CD4-positive, alpha-beta memory T cell (primary cell): ENCODE measurements at regions of chr17 and their contacts with region 1.

Region 1: GRCh38 chr17:7306911-7307686 is at the start of gene EIF5A:
- DNase-seq: peak; percentile 99 to 100 (median 100)
- H3K4me3 ChIP-seq: peak within 1 kb of the TSS; percentile 81 to 85
- H3K4me3 Mint-ChIP-seq: peak within 1 kb of the TSS; percentile 93 to 97 (median 95)
- H3K27ac ChIP-seq: peak within 1 kb of the TSS; percentile 100
- H3K27ac Mint-ChIP-seq: peak within 1 kb of the TSS; percentile 99 to 100 (median 99)
- H3K4me1 ChIP-seq: peaks cover 35% of the 10 kb centered on the region
- H3K4me1 Mint-ChIP-seq: peaks cover 29 to 47% (median 36%) of the 10 kb centered on the region in 4 donors
- H3K27me3 ChIP-seq: no peaks in the 10 kb centered on the region
- H3K27me3 Mint-ChIP-seq: peaks cover 0 to 4% of the 10 kb centered on the region in 2 donors
- total RNA-seq, gene EIF5A: 240 to 244 TPM

Region 2: GRCh38 chr17:7214300-7215135 is 92.6 kb before region 1 on chr17:
- CTCF ChIA-PET with region 1: interaction called, 3 read pairs
- POLR2A ChIA-PET with region 1: no interaction called
- intact Hi-C with region 1: loop called (anchors 2 kb)
- DNase-seq: peak; percentile 97 to 99 (median 98)
- H3K4me3 ChIP-seq: peak overlapping the region; percentile 68 to 73
- H3K4me3 Mint-ChIP-seq: peak overlapping the region; percentile 90 to 98 (median 93)
- H3K27ac ChIP-seq: peak overlapping the region; percentile 96
- H3K27ac Mint-ChIP-seq: peak overlapping the region; percentile 98 to 100 (median 100)
- H3K4me1 ChIP-seq: peaks cover 54% of the 10 kb centered on the region
- H3K4me1 Mint-ChIP-seq: peaks cover 26 to 67% (median 43%) of the 10 kb centered on the region in 4 donors
- H3K27me3 ChIP-seq: no peaks in the 10 kb centered on the region
- H3K27me3 Mint-ChIP-seq: peaks cover 0 to 13% of the 10 kb centered on the region in 2 donors

Region 3: DNA sequence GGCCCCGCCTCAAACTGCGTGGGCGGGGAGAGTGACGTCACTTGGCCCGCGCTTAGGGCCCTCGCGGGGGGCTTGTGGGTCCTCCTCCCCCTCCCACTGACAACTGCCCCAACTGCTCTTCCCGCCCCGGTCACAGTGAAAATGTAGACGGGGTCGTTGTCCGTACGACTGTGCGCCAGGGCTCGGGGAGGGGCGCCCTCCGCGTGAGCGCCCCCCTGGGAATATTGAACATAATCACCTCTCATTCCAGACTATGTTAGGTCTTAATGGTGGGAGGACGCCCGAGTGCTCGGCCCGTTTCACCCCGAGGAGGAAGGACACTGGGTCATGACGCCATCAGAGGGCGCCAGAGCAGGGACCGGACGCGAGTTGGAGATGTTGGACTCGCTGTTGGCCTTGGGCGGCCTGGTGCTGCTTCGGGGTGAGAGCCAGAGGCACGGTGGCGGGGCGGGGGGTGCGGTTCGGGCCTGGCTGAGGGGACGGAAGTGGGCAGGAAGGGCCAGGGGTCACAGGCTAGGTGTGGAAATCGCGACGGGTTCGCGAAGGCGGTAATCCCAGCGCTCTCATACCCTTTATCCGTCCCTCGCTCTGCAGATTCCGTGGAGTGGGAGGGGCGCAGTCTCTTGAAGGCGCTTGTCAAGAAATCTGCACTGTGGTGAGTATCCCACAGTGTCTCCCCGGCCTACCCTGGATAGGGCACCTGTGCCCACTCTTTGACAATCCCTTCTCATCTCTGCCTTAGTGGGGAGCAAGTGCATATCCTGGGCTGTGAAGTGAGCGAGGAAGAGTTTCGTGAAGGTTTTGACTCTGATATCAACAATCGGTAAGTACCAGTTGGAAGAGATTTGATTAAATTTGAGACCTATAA is 54.7 kb before region 1 on chr17 and contains the start of gene ELP5:
- CTCF ChIA-PET with region 1: no interaction called
- POLR2A ChIA-PET with region 1: interaction called, 3 read pairs
- intact Hi-C with region 1: loop called (anchors 1 kb)
- DNase-seq: peak in 4 of 5 donors; percentile 86 to 92 (median 88)
- H3K4me3 ChIP-seq: peak within 1 kb of the TSS; percentile 71 to 92
- H3K4me3 Mint-ChIP-seq: peak within 1 kb of the TSS; percentile 91 to 97 (median 95)
- H3K27ac ChIP-seq: peak within 1 kb of the TSS; percentile 98
- H3K27ac Mint-ChIP-seq: peak within 1 kb of the TSS; percentile 98 to 100 (median 99)
- H3K4me1 ChIP-seq: peaks cover 37% of the 10 kb centered on the region
- H3K4me1 Mint-ChIP-seq: peaks cover 25 to 49% (median 38%) of the 10 kb centered on the region in 4 donors
- H3K27me3 ChIP-seq: no peaks in the 10 kb centered on the region
- H3K27me3 Mint-ChIP-seq: no peaks in the 10 kb centered on the region
- total RNA-seq, gene ELP5: 29.8 to 30.9 TPM

Region 4: DNA sequence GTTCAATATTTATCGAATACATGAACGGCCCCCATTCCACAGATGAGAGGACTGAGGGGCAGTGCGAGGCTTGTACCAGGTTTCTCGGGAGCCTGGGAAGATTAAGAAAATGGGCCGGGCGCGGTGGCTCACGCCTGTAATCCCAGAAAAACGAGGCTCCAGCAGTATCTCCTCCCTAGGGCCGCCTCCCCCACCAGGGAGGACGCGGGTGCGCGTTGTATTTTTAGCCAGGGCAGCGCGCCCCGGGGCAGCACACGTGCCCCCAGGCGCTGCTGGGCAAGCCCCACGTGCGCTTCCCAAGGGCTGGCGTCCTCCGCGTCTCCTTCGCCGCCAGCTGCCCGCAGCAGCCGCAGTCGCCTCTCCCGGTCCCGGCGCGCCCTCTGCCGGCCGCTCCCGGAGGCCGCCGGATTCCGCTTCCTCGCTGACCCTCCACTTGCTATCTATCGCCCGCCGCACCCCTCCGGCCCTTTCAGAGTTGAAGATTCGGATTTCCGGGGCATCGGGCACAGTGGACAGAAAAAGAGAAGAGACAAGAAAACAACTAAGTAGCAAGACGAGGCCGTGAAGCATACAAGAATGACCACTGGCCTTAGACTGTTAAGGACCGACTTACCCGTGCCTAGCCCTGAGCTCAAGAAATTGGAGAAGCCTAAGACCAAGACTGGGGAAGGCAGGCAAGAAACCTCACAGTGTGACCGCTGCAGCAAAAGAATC is 10.8 kb before region 1 on chr17:
- CTCF ChIA-PET with region 1: interaction called, 16 read pairs
- POLR2A ChIA-PET with region 1: interaction called, 4 read pairs
- intact Hi-C with region 1: loop called (anchors 1 kb)
- DNase-seq: peak; percentile 41 to 62 (median 51)
- H3K4me3 ChIP-seq: no peak overlapping the region
- H3K4me3 Mint-ChIP-seq: peak overlapping the region in 6 of 8 donors; percentile 8 to 86 (median 50)
- H3K27ac ChIP-seq: no peak overlapping the region
- H3K27ac Mint-ChIP-seq: peak overlapping the region in 3 of 7 donors; percentile 55 to 60 (median 59)
- H3K4me1 ChIP-seq: peaks cover 26% of the 10 kb centered on the region
- H3K4me1 Mint-ChIP-seq: peaks cover 7 to 31% (median 18%) of the 10 kb centered on the region in 4 donors
- H3K27me3 ChIP-seq: no peaks in the 10 kb centered on the region
- H3K27me3 Mint-ChIP-seq: peaks cover 2 to 19% of the 10 kb centered on the region in 2 donors

Region 5: DNA sequence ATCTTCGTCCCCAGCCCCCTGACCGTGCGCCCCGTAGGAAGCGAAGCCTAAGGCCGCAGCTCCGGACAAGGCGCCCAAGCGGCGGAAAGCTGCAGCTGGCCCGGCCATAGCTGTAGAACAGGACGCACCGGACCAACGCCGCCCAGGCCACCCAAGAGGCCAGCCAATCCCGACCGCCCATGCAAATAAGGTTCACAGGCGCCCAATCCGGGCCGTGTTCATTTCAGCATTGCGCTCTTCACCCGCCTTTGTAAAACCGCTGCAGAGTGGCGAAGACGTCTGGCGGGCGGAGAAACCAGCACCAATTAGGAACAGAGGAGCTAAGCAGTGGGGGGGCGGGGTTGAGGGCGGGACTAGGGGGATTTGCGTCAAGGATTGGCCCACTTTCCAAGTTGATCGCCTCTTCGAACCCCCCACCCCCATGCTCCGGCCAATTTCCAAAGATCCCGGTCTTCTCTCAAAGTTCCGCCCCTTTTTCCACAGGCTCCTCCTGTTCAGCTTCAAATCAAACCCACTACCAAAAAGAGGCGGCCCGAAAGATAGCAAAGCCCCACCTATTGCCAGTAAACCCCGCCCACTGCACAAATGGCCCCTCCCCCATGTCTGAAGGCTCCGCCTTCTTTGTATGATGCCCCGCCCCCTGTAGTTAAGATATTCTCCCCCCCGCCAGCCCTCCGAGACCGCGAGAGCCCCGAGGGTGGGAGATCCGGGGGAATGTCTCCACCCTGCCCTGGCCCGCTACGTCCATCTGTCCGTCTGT is 97.1 kb after region 1 on chr17 and contains the start of gene TMEM256:
- CTCF ChIA-PET with region 1: no interaction called
- POLR2A ChIA-PET with region 1: interaction called, 3 read pairs
- intact Hi-C with region 1: loop called (anchors 1 kb)
- DNase-seq: peak; percentile 91 to 98 (median 94)
- H3K4me3 ChIP-seq: peak within 1 kb of the TSS; percentile 73 to 77
- H3K4me3 Mint-ChIP-seq: peak within 1 kb of the TSS; percentile 93 to 98 (median 97)
- H3K27ac ChIP-seq: peak within 1 kb of the TSS; percentile 51
- H3K27ac Mint-ChIP-seq: peak within 1 kb of the TSS; percentile 89 to 99 (median 98)
- H3K4me1 ChIP-seq: peaks cover 17% of the 10 kb centered on the region
- H3K4me1 Mint-ChIP-seq: peaks cover 16 to 40% (median 18%) of the 10 kb centered on the region in 4 donors
- H3K27me3 ChIP-seq: no peaks in the 10 kb centered on the region
- H3K27me3 Mint-ChIP-seq: peaks cover 2% of the 10 kb centered on the region in 2 donors
- total RNA-seq, gene TMEM256: 35.4 to 38.3 TPM

Region 6: DNA sequence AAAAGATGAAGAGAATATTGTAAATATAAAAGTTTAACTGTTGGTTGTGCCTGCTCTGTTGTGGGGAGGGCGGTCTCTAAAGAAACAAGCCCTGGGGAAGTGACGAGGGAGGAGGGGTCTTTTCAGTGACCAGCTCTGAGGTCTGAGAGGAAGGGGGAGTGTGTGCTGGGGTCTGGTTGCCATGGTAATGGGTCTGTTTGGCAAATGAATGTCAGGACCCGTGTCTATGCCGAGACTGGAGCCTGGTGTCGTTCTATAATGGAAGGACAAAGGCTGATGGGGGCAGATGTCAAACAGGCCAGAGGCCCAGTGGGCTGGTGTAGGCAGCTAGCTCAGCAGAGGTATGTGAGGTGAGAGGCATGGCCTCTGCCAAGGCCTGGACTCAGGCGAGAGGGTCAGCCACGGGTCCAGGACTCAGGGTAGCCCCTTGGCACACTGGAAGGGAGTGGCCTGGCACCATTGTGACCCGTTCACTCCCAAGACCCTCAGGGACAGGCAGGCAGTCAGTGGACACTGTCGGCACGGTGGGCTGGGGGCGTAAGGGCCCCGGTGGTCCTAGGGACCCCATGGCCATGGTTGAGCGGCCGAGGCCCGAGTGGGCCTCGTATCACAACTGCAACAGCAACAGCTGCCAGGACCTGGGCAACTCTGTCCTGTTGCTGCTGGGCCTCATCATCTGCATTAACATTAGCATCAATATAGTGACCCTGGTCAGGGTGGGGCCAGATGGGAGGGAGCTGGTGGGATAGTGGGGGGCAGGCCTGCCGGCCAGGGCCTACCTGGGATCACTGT is 112.9 kb after region 1 on chr17 and contains the start of gene SPEM1:
- CTCF ChIA-PET with region 1: no interaction called
- POLR2A ChIA-PET with region 1: no interaction called
- intact Hi-C with region 1: no loop called
- DNase-seq: no peak
- H3K4me3 ChIP-seq: no peak within 1 kb of the TSS
- H3K4me3 Mint-ChIP-seq: no peak within 1 kb of the TSS
- H3K27ac ChIP-seq: no peak within 1 kb of the TSS
- H3K27ac Mint-ChIP-seq: peak within 1 kb of the TSS in 2 of 7 donors; percentile 53 to 58
- H3K4me1 ChIP-seq: no peaks in the 10 kb centered on the region
- H3K4me1 Mint-ChIP-seq: peaks cover 0 to 4% (median 1%) of the 10 kb centered on the region in 4 donors
- H3K27me3 ChIP-seq: no peaks in the 10 kb centered on the region
- H3K27me3 Mint-ChIP-seq: peaks cover 0 to 1% of the 10 kb centered on the region in 2 donors
- total RNA-seq, gene SPEM1: not detected

Region 7: GRCh38 chr17:7550344-7550743 is 243.2 kb after region 1 on chr17:
- CTCF ChIA-PET with region 1: no interaction called
- POLR2A ChIA-PET with region 1: no interaction called
- intact Hi-C with region 1: no loop called
- DNase-seq: no peak
- H3K4me3 ChIP-seq: peak overlapping the region in 1 of 2 donors; percentile 82
- H3K4me3 Mint-ChIP-seq: peak overlapping the region in 7 of 8 donors; percentile 82 to 96 (median 92)
- H3K27ac ChIP-seq: peak overlapping the region; percentile 79
- H3K27ac Mint-ChIP-seq: peak overlapping the region; percentile 22 to 96 (median 94)
- H3K4me1 ChIP-seq: peaks cover 45% of the 10 kb centered on the region
- H3K4me1 Mint-ChIP-seq: peaks cover 33 to 60% (median 50%) of the 10 kb centered on the region in 4 donors
- H3K27me3 ChIP-seq: no peaks in the 10 kb centered on the region
- H3K27me3 Mint-ChIP-seq: no peaks in the 10 kb centered on the region

Region 8: GRCh38 chr17:7614422-7615264 is 307.5 kb after region 1 on chr17 and contains the start of gene FXR2:
- CTCF ChIA-PET with region 1: no interaction called
- POLR2A ChIA-PET with region 1: no interaction called
- intact Hi-C with region 1: loop called (anchors 1 kb)
- DNase-seq: peak; percentile 98 to 100 (median 99)
- H3K4me3 ChIP-seq: peak within 1 kb of the TSS; percentile 74 to 78
- H3K4me3 Mint-ChIP-seq: peak within 1 kb of the TSS; percentile 87 to 95 (median 93)
- H3K27ac ChIP-seq: peak within 1 kb of the TSS; percentile 66
- H3K27ac Mint-ChIP-seq: peak within 1 kb of the TSS; percentile 83 to 98 (median 97)
- H3K4me1 ChIP-seq: peaks cover 42% of the 10 kb centered on the region
- H3K4me1 Mint-ChIP-seq: peaks cover 22 to 49% (median 36%) of the 10 kb centered on the region in 4 donors
- H3K27me3 ChIP-seq: no peaks in the 10 kb centered on the region
- H3K27me3 Mint-ChIP-seq: no peaks in the 10 kb centered on the region
- total RNA-seq, gene FXR2: 44.1 to 46.6 TPM